Activated naive CD4-positive, alpha-beta T cell treated with anti-CD3 and anti-CD28 coated beads for 36 hours (primary cell): ENCODE measurements at regions of chr7 and their contacts with region 1.

Region 1: DNA sequence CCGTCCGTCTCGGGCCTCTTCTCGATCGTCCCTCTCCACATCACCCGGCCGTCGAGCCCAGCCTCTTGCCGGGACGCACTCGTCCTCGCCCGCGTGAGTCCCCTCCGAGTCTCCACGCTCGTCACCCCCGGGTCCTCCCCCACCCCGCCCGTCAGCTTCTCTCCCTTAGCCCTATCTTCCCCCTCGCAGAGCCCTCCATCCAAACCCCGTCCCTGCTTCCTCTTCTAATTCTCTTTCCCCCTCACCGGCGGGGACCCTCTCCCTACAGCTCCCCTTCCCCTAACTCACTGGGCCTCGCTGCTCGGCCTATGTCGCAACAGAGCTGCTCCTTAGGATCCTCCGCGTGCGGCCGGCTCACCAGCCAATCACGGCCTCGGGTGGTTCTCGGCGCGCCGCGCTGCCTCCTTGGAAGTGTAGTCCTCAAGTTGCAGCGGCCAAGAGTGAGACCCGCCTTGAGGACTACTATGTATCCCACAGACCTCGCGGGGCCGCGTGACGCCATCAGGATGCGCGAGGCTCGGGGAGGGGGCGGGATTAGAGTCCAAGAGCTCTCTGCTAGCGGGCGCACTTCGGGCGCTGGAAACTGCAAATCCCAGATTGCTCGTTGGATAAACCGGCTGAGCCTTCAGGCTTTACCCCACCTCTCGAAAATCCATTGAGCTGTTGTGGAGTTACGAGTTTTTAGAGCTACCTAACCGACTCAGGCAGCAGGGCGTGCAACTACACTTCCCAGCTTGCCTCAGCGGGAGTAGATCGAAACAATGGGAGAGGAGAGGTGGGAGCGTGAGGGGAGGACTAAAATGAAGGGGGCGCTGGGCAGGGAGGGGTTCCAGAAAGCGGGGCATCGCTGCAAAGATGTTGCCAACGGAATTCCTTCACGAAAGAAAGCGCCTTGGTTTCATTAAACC is at the start of gene ABCF2:
- DNase-seq: peak; percentile 100
- H3K4me3 Mint-ChIP-seq: peak within 1 kb of the TSS; percentile 99
- H3K27ac Mint-ChIP-seq: peak within 1 kb of the TSS; percentile 81
- H3K4me1 Mint-ChIP-seq: peaks cover 43% of the 10 kb centered on the region
- H3K27me3 Mint-ChIP-seq: no peaks in the 10 kb centered on the region
- total RNA-seq, gene ABCF2: 33.9 to 35.5 TPM

Region 2: DNA sequence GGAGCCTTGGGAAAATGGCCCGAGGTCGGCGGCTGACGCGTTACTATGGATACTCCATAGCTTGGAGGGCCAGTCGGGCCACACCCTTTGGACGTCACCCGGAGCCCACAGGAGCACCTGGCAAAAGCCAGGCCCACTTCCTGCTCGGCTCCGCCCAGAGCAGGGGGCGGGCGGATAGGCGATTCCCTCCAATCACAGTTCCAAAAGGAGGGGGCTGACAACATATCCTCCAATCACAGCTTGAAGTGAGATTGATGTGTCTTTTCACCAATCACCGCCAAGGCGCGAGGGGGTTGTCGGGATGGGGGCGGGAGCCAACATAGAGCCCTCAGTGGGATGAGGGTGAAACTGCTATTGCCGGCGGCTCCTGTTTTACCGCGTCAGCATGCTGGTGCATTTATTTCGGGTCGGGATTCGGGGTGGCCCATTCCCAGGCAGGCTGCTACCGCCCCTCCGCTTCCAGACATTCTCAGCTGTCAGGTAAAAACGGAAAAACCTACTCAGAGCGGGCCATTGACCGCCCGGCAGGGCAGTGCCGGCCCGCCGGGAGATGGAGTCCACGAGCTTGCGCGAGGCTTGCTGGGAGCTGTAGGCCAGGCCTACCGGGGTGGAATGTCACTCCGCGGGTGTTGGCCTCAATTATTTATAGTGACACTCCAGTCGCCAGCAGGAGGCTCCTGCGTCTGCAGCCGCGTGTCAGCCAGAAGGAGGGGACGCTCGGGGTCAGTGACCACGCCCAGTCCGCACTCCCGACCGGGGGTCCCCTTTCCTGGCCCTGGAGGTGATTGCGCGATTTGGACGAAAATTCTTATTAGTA is 198.8 kb before region 1 on chr7 and contains the start of gene ABCB8:
- CTCF ChIA-PET with region 1: no interaction called
- intact Hi-C with region 1: loop called (anchors 2 kb)
- DNase-seq: peak; percentile 100
- H3K4me3 Mint-ChIP-seq: peak within 1 kb of the TSS; percentile 91
- H3K27ac Mint-ChIP-seq: peak within 1 kb of the TSS; percentile 90
- H3K4me1 Mint-ChIP-seq: peaks cover 20% of the 10 kb centered on the region
- H3K27me3 Mint-ChIP-seq: no peaks in the 10 kb centered on the region
- total RNA-seq, gene ABCB8: 41.3 to 47.8 TPM

Region 3: GRCh38 chr7:151080522-151081169 is 146.5 kb before region 1 on chr7 and contains the start of gene FASTK:
- CTCF ChIA-PET with region 1: no interaction called
- intact Hi-C with region 1: loop called (anchors 1 kb)
- DNase-seq: peak; percentile 93
- H3K4me3 Mint-ChIP-seq: peak within 1 kb of the TSS; percentile 86
- H3K27ac Mint-ChIP-seq: peak within 1 kb of the TSS; percentile 73
- H3K4me1 Mint-ChIP-seq: peaks cover 36% of the 10 kb centered on the region
- H3K27me3 Mint-ChIP-seq: peaks cover 7% of the 10 kb centered on the region
- total RNA-seq, gene FASTK: 43.6 to 45.7 TPM

Region 4: GRCh38 chr7:151276666-151277590 is 49.8 kb after region 1 on chr7:
- CTCF ChIA-PET with region 1: no interaction called
- intact Hi-C with region 1: loop called (anchors 2 kb)
- DNase-seq: peak; percentile 74
- H3K4me3 Mint-ChIP-seq: peak overlapping the region; percentile 61
- H3K27ac Mint-ChIP-seq: no peak overlapping the region
- H3K4me1 Mint-ChIP-seq: peaks cover 17% of the 10 kb centered on the region
- H3K27me3 Mint-ChIP-seq: no peaks in the 10 kb centered on the region

Region 5: GRCh38 chr7:151491859-151492258 is 264.7 kb after region 1 on chr7:
- CTCF ChIA-PET with region 1: no interaction called
- intact Hi-C with region 1: no loop called
- DNase-seq: no peak
- H3K4me3 Mint-ChIP-seq: no peak overlapping the region
- H3K27ac Mint-ChIP-seq: no peak overlapping the region
- H3K4me1 Mint-ChIP-seq: peaks cover 27% of the 10 kb centered on the region
- H3K27me3 Mint-ChIP-seq: no peaks in the 10 kb centered on the region

Region 6: DNA sequence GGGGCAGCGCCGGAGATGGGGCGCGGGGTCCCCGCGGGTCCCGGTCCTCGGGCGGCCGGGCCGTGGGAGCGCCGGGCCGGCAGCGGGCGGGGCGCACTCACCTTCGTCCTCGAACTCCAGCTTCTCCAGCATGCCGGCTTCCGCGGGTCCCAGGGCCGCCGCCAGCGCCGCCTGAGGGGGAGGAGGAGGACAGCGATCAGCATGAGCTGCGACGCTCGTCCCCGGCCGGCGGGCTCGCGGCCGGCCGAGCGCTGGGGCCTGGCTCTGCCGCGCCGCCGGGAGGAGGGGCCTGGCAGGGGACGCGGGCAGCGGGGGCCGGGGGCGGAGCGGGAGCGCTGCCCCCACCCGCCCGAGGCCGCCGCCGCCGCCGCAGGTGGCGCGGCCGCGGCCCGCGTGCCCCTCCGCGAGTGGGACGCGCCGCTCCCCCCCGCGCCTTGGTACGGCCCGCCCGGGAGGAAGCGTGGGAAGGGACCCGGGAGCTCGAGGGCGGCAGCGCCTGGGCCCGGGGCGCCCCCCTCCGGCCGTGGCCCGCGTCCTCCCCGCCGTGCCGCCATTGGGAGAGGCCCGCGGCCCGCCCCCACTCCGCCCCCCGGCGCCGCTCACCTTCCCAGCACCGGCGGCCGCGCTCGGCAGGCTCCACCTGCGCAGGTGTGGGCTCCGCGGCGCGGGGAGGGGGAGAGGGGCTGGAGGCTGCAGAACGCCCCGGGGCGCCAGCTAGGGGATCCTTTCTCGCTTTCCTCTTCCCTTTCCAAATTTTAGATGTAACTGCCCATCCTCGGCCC is 405.0 kb after region 1 on chr7:
- CTCF ChIA-PET with region 1: no interaction called
- intact Hi-C with region 1: loop called (anchors 2 kb)
- DNase-seq: peak; percentile 87
- H3K4me3 Mint-ChIP-seq: peak overlapping the region; percentile 95
- H3K27ac Mint-ChIP-seq: peak overlapping the region; percentile 99
- H3K4me1 Mint-ChIP-seq: peaks cover 23% of the 10 kb centered on the region
- H3K27me3 Mint-ChIP-seq: no peaks in the 10 kb centered on the region